Aorta (tissue), 5 donors: ENCODE measurements at regions of chr17 and their contacts with region 1.

Region 1: DNA sequence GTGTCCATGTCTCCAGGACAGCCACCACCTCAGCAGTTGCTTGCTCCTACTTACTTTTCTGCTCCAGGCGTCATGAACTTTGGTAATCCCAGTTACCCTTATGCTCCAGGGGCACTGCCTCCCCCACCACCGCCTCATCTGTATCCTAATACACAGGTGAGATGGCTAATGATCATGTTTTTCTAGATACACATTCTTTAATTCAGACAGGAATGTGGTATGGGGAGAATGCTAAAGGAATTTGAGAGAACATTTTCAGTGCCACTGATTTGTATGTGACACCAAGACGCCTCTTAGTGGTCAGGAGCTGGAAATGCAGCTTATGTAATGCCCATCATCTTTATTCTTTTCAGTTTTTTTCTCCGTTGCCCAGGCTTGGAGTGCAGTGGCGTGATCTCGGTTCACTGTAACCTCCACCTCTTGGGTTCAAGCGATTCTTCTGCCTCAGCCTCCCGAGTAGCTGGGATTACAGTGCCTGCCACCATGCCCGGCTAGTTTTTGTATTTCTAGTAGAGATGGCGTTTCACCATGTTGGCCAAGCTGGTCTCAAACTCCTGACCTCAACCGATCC is 8.9 kb upstream of the RAPGEFL1 start:
- DNase-seq: no peak
- ATAC-seq: peak; percentile 85
- H3K4me3 ChIP-seq: no peak overlapping the region
- H3K27ac ChIP-seq: peak overlapping the region in 1 of 2 donors; percentile 71
- H3K4me1 ChIP-seq: peaks cover 0 to 3% of the 10 kb centered on the region in 2 donors
- H3K27me3 ChIP-seq: no peaks in the 10 kb centered on the region

Region 2: GRCh38 chr17:40019140-40019991 is 149.0 kb before region 1 on chr17:
- intact Hi-C with region 1: loop called (anchors 5 kb)
- DNase-seq: peak in 1 of 2 donors; percentile 79
- ATAC-seq: no peak
- H3K4me3 ChIP-seq: no peak overlapping the region
- H3K27ac ChIP-seq: no peak overlapping the region
- H3K4me1 ChIP-seq: no peaks in the 10 kb centered on the region
- H3K27me3 ChIP-seq: no peaks in the 10 kb centered on the region

Region 3: DNA sequence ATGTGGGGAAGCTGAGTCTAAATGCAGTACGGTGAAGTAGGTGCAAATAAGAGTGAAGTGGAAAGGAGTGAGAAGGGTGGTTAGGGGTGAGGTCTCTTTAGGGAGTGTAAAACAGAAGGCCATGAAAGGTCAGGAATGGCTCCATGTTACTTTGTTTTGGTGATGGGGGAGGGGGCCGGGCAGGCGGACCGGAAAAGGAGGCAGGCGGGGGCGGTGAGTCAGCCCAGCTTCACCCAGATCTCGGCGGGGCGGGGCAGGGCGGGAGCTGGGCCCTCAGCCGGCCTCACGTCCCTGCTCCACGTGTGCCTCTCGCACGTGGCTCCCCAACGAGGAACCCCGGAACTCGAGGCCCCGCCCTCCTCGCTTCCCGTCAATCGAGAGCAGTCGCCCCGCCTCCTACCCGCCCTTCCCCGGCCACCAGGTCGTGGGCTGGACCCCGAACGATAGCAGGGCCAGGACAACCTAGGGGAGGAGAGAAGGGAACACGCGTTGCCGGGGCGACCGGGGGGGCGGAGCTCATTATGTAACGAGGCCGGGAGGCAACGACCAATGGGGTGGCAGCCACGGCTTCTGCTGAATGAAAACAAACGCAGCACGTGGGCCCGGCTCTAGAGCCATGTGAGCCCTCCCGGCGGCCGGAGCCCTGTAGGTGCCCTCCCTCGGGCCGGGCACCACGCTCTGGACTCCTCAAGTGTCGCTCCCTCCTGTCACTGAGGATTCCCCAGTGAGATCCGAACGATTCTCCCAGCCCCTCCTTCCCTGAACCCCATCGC is 69.3 kb before region 1 on chr17:
- intact Hi-C with region 1: loop called in 1 of 2 experiments (anchors 5 kb)
- DNase-seq: peak; percentile 100
- ATAC-seq: peak; percentile 90
- H3K4me3 ChIP-seq: peak overlapping the region; percentile 43 to 76
- H3K27ac ChIP-seq: peak overlapping the region; percentile 87 to 92
- H3K4me1 ChIP-seq: no peaks in the 10 kb centered on the region
- H3K27me3 ChIP-seq: no peaks in the 10 kb centered on the region

Region 4: GRCh38 chr17:40314584-40314955 is 146.2 kb after region 1 on chr17:
- intact Hi-C with region 1: no loop called
- DNase-seq: peak; percentile 96 to 99
- ATAC-seq: peak; percentile 15
- H3K4me3 ChIP-seq: no peak overlapping the region
- H3K27ac ChIP-seq: peak overlapping the region; percentile 16 to 65
- H3K4me1 ChIP-seq: peaks cover 5 to 9% of the 10 kb centered on the region in 2 donors
- H3K27me3 ChIP-seq: no peaks in the 10 kb centered on the region